ENCODE measurements at regions of chr4 and their contacts with region 1.

Region 1: DNA sequence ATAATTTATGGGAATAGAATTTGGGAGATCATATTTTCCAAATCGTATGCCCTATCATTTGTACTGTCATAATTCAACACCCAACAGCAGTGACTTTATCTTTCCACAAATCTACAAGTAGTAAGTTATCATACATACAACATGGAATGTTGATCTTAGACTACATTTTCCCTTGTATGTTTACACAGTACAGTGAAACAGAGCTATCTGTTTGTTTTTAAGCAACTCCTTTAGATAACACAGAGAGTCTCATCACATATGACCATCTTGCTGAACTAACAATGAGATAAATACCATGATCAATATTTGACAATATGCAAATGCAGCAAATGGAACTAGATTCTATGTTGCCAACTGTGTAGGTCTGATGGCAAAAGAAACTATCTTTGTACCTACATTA is 246.2 kb downstream of the TECRL start:
- DNase-seq: no peak
- H3K4me3 ChIP-seq: no peak overlapping the region
- H3K27ac ChIP-seq: no peak overlapping the region
- H3K4me1 ChIP-seq: no peaks in the 10 kb centered on the region
- H3K27me3 ChIP-seq: no peaks in the 10 kb centered on the region
- CTCF ChIP-seq: no peak
- POLR2A ChIP-seq: no peak

Region 2: DNA sequence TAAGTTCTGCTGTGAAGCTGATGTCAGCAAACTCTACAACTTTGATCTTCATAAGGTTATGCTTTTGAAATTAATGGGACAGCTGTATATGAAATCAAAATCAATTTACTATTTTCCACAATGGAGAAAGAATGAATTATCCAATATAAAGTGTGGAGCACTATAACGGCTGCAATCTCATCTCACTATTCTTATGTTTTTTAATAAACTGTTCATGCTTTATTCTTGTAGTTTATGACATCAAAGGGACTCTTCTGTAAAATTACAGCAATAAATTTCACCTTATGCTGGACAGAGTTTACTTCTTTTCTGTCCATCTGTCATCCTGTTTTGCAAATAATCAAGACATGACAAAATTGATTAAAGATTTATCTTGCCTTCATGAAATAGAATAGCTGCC is 53.7 kb after region 1 on chr4:
- intact Hi-C with region 1: loop called (anchors 2 kb)
- DNase-seq: no peak
- H3K4me3 ChIP-seq: no peak overlapping the region
- H3K27ac ChIP-seq: no peak overlapping the region
- H3K4me1 ChIP-seq: no peaks in the 10 kb centered on the region
- H3K27me3 ChIP-seq: no peaks in the 10 kb centered on the region
- CTCF ChIP-seq: no peak
- POLR2A ChIP-seq: no peak